ENCODE measurements at regions of chr13 and their contacts with region 1.

Region 1: GRCh38 chr13:42544246-42544926 is 29.6 kb upstream of the TNFSF11 start:
- DNase-seq: no peak
- CTCF ChIP-seq: no peak

Region 2: DNA sequence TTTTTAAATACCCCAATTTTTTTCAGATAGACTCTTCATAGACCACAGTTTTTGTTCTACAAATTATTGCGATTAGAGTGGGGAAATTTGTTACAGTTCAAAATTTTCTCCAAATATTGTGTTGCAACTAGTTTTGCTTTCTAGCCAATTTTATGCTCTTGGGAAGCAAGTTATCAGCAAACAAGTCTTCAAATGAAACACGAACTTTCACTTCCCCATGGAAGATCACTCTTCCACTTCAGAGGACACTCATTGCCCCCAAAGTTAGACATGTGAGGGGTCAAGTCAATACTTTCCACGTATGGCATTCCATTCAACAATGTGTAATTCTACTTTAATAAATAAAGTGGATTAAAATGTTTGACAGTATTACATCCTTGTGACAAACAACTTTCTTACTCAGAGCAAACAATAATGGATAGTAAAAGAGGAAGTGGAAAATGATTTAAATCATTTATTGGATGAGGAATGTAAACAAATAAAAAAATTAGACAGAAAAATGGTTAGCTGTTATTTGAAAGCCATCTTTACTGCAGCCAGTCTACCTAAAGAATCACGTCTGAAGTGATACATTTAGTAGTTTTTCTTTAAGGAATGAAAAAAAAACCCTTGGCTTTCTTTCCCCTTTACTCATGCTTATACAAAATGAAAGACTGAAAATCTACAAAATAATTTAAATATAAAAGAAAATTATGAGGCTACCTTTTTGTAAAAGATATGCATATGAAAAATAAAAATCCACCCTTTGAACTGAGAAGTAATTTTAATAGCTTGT is 11.6 kb before region 1 on chr13:
- CTCF ChIA-PET with region 1: interaction called, 10 read pairs
- POLR2A ChIA-PET with region 1: no interaction called
- DNase-seq: peak; percentile 25
- CTCF ChIP-seq: no peak